Activated naive CD4-positive, alpha-beta T cell treated with anti-CD3 and anti-CD28 coated beads for 36 hours (primary cell): ENCODE measurements at regions of chr3 and their contacts with region 1.

Region 1: GRCh38 chr3:128617557-128618397 is 32.8 kb downstream of the RPN1 start:
- DNase-seq: peak; percentile 99
- H3K4me3 Mint-ChIP-seq: peak overlapping the region; percentile 95
- H3K27ac Mint-ChIP-seq: peak overlapping the region; percentile 89
- H3K4me1 Mint-ChIP-seq: peaks cover 32% of the 10 kb centered on the region
- H3K27me3 Mint-ChIP-seq: no peaks in the 10 kb centered on the region

Region 2: GRCh38 chr3:128572644-128573105 is 45.1 kb before region 1 on chr3:
- CTCF ChIA-PET with region 1: interaction called, 6 read pairs
- intact Hi-C with region 1: loop called (anchors 1 kb)
- DNase-seq: peak; percentile 83
- H3K4me3 Mint-ChIP-seq: peak overlapping the region; percentile 13
- H3K27ac Mint-ChIP-seq: peak overlapping the region; percentile 43
- H3K4me1 Mint-ChIP-seq: peaks cover 18% of the 10 kb centered on the region
- H3K27me3 Mint-ChIP-seq: peaks cover 17% of the 10 kb centered on the region

Region 3: DNA sequence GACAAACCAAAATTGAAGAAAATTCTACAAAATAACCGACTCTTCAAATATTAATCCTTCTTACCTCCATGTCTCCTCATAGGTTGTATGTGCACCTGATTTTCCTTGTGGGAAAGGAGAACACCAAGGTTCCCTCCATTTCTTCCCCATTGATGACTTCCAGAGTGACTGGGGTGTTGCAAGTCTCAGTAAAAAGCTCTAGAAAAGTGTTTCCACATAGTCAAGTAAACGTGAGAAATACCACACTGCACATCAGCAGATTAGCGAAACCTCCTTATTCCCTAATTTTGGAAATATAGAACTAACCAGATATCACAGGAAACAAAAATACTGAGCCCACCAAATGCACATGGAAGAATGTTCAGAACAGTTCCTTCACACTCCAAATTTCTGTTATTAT is 37.8 kb after region 1 on chr3:
- CTCF ChIA-PET with region 1: interaction called, 14 read pairs
- intact Hi-C with region 1: loop called (anchors 1 kb)
- DNase-seq: no peak
- H3K4me3 Mint-ChIP-seq: no peak overlapping the region
- H3K27ac Mint-ChIP-seq: no peak overlapping the region
- H3K4me1 Mint-ChIP-seq: peaks cover 6% of the 10 kb centered on the region
- H3K27me3 Mint-ChIP-seq: no peaks in the 10 kb centered on the region

Region 4: DNA sequence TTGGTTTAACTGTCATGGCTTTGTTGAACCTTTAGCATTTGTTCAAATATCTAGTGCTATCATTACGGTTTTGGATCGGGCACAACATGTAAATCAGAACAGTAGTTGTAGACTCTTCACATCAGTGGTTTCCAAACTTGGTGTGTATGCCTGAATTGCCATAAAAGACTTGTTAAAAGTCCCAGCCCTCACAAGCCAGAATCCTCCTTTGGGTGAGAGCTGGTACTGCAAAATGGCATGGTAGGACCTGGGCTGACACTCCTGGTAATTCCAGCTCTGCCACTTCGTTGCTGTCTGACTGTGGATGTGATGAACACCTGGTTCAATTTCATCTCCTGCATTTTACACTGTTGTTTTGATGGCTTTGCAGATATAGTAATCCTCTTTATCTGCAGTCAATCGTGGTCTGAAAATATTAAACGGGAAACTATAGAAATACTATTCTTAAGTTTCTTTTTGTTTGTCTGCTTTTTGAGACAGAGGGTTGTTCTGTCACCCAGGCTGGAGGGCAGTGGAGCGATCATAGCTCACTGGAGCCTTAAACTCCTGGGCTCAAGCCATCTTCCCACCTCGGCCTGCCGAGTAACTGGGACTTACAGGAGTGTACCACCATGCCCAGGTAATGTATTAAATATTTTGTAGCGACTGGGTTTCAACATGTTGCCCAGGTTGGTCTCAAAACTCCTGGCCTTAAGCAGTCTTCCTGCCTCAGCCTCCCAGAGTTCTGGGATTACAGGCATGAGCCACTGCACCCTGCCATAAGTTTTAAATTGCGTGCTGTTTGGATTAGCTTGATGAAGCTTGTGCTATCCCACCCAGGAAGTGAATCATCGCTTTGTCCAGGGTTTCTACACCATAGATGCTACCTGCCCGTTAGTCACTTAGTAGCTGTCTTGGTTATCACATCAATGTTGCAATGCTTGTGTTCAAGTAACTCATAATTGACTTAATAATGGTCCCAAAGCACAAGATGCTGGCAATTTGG is 169.8 kb after region 1 on chr3:
- CTCF ChIA-PET with region 1: interaction called, 3 read pairs
- intact Hi-C with region 1: loop called (anchors 1 kb)
- DNase-seq: peak; percentile 69
- H3K4me3 Mint-ChIP-seq: peak overlapping the region; percentile 76
- H3K27ac Mint-ChIP-seq: peak overlapping the region; percentile 99
- H3K4me1 Mint-ChIP-seq: peaks cover 98% of the 10 kb centered on the region
- H3K27me3 Mint-ChIP-seq: no peaks in the 10 kb centered on the region

Region 5: GRCh38 chr3:128845778-128846485 is 228.2 kb after region 1 on chr3:
- CTCF ChIA-PET with region 1: interaction called, 15 read pairs
- intact Hi-C with region 1: loop called (anchors 1 kb)
- DNase-seq: peak; percentile 89
- H3K4me3 Mint-ChIP-seq: peak overlapping the region; percentile 69
- H3K27ac Mint-ChIP-seq: peak overlapping the region; percentile 79
- H3K4me1 Mint-ChIP-seq: peaks cover 17% of the 10 kb centered on the region
- H3K27me3 Mint-ChIP-seq: no peaks in the 10 kb centered on the region

Region 6: DNA sequence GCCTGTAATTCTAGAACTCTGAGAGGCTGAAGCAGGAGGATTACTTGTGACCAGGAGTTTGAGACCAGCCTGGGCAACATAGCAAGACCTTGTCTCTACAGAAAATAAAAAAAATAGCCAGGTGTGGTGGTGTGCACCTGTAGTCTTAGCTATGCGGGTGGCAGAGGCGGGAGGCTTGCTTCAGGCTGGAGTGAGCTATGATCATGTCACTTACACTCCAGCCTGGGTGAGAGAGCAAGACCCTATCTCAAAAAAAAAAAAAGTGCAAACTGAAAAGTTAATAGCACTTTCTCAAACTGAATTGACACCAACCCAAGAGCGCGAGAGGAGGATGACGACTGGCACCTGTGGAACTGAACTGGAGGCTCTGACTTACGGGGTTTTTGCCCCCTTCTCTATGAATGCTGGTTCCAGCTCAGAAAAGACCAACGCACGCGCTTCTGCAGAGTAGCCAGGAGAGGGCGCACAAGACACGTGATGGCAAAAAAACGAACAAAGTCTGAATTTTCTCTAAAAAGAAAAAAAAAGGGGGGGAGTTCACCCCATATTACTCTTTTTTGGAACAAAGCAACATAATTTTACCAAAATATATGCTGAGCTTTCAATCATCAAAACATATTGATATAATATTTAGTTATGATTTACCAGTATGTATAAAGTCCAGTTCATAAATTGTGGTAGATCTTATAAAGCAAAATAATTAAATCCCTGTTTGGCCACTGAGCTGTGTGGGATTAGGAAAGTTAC is 352.4 kb after region 1 on chr3:
- CTCF ChIA-PET with region 1: no interaction called
- intact Hi-C with region 1: loop called (anchors 1 kb)
- DNase-seq: peak; percentile 78
- H3K4me3 Mint-ChIP-seq: no peak overlapping the region
- H3K27ac Mint-ChIP-seq: no peak overlapping the region
- H3K4me1 Mint-ChIP-seq: no peaks in the 10 kb centered on the region
- H3K27me3 Mint-ChIP-seq: no peaks in the 10 kb centered on the region